Right cardiac atrium (tissue), 5 donors: ENCODE measurements at regions of chr1 and their contacts with region 1.

Region 1: GRCh38 chr1:34162852-34163766 is 1.9 kb downstream of the CSMD2 start:
- DNase-seq: peak; percentile 79 to 87 (median 87)
- ATAC-seq: peak; percentile 90 to 94
- H3K4me3 ChIP-seq: peak overlapping the region; percentile 33
- H3K27ac ChIP-seq: no peak overlapping the region
- H3K4me1 ChIP-seq: no peaks in the 10 kb centered on the region
- H3K27me3 ChIP-seq: peaks cover 3% of the 10 kb centered on the region

Region 2: DNA sequence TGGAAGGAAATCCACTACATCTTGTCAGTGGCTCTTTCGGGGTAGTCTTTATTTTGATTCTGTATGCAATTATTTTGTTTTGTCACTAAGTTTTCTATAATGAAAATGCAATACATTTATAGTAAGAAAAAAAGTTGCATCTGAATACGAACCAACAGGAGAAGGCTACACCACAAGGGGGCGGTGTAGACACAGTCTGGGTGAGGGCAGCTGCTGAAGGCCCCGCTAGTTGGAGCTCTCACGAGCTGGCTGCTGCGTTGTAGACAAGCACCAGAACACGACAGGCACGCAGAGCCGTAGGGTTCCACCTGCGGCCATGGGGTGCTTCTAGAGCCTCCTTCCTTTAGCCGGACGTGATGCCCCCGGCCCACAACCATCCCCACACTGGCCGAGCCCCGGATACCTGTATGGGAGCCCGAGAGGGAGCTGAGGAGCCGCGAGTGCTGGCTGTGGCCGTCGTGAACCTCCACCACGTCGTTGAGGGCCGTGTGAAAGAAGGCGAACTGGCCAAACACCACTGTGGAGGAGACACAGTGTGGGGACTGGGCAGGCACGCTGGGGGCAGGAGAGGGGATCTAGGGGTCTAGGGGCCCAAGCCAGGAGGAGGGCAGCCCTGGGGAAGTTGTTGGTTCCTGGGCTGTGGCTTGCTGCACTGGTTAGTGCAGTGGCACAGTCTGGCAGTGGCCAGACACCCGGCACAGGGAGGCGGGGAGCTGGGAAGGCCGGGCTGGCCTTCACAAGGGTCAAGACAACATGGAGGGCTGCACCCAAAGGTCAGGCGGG is 529.9 kb before region 1 on chr1:
- intact Hi-C with region 1: loop called in 1 of 4 experiments (anchors 10 kb)
- DNase-seq: peak; percentile 91 to 96 (median 93)
- ATAC-seq: peak; percentile 83 to 85
- H3K4me3 ChIP-seq: no peak overlapping the region
- H3K27ac ChIP-seq: no peak overlapping the region
- H3K4me1 ChIP-seq: no peaks in the 10 kb centered on the region
- H3K27me3 ChIP-seq: no peaks in the 10 kb centered on the region

Region 3: DNA sequence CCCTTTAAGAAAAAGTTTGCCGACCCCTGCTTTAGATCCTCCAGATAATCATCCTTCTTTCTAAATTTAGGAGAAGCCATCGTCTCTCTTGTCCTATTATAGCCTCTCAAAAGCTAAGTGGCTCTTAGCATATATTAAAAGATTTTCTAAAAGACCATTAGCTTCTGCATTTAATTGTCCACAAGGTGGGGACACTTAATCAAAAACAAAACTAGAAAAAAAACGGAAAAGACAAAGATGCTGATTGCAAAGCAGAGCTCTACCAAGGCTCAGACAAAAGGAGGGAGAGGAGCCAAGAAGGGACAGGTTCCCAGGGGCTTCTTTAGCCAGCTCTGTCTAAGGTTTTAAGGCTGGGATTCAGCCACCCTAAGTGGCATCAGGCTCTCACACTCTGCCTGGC is 427.5 kb before region 1 on chr1:
- intact Hi-C with region 1: loop called in 2 of 4 experiments (anchors 5 to 10 kb)
- DNase-seq: no peak
- ATAC-seq: peak in 1 of 2 donors; percentile 16
- H3K4me3 ChIP-seq: no peak overlapping the region
- H3K27ac ChIP-seq: no peak overlapping the region
- H3K4me1 ChIP-seq: no peaks in the 10 kb centered on the region
- H3K27me3 ChIP-seq: no peaks in the 10 kb centered on the region